ENCODE measurements at regions of chr14 and their contacts with region 1.

Region 1: GRCh38 chr14:103910262-103910935 is 17.9 kb upstream of the TDRD9 start:
- DNase-seq: peak; percentile 84 to 93
- H3K4me3 ChIP-seq: no peak overlapping the region
- H3K27ac ChIP-seq: no peak overlapping the region
- H3K4me1 ChIP-seq: 0 out of 2 replicates have a peak, but pooled peaks cover 3% of the 10 kb centered on the region
- H3K27me3 ChIP-seq: no peaks in the 10 kb centered on the region
- CTCF ChIP-seq: peak; percentile 87

Region 2: DNA sequence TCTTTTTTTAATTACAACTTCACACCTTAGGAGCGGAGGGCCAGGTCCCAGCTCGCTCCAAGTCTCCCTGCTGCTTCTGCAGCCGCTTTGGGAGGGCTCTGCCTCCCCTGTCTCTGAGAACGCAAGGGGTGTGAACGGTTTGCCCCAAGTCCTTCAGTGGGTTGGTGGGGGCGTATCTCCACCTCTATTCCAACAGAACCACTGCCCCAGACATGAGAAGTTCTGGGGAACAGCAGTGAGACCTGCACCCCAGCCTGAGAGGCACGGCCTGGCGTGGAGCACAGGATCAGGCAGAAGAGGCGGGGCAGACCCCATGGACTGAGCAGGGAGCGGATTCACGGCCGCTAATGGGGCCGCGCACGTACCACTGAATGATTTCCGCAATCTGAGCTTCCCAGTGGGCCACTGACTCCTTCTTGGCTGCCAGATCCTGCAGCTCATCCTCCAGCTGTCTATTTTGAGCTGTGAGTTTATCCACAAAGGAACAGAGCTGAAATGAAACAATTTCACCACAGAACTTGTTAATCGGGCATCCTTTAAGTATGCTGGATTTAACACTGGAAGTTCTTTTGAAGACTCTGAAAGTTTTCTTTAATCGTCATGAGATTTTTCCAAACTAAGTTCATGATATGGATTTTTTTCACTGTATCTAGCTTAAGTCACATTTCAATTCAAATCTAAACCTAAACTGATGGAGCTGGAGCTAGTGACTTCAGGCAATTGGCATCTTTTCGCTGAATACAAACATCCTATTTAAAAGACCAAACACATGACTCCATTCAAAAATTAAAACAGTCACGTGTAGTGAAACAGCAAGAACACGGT is 943.5 kb before region 1 on chr14:
- CTCF ChIA-PET with region 1: no interaction called
- POLR2A ChIA-PET with region 1: no interaction called
- intact Hi-C with region 1: no loop called
- DNase-seq: no peak
- H3K4me3 ChIP-seq: no peak overlapping the region
- H3K27ac ChIP-seq: no peak overlapping the region
- H3K4me1 ChIP-seq: no peaks in the 10 kb centered on the region
- H3K27me3 ChIP-seq: no peaks in the 10 kb centered on the region
- CTCF ChIP-seq: no peak

Region 3: GRCh38 chr14:103404032-103404918 is 506.1 kb before region 1 on chr14:
- CTCF ChIA-PET with region 1: no interaction called
- POLR2A ChIA-PET with region 1: no interaction called
- intact Hi-C with region 1: no loop called
- DNase-seq: no peak
- H3K4me3 ChIP-seq: no peak overlapping the region
- H3K27ac ChIP-seq: peak overlapping the region; percentile 63
- H3K4me1 ChIP-seq: peaks cover 36% of the 10 kb centered on the region
- H3K27me3 ChIP-seq: no peaks in the 10 kb centered on the region
- CTCF ChIP-seq: no peak

Region 4: DNA sequence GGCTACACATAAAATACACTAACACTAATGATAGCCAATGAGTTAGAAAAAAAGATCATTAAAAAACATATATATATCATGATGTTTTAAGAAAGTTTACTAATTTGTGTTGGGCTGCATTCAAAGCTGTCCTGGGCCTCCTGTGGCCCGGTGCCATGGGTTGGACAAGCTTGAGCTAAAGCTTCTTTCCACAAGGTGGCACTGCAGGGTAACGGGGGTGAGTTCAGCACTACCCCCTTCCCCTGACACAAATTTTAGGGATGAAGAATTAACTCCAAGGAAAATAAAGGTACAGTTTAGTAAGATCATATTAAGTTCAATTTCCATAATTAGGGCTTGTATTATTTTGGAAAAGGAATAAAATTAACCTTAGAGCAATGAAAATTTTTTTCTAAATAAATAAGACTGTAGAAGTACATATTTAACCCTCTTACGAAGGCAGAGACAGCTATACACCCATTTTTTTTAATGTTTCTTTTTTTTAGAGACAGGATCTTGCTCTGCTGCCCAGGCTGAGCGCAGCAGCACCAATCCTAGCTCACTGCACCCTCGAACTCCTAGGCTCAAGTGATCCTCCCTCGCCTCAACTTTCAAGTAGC is 101.9 kb before region 1 on chr14:
- CTCF ChIA-PET with region 1: interaction called, 8 read pairs
- POLR2A ChIA-PET with region 1: no interaction called
- intact Hi-C with region 1: loop called (anchors 1 kb)
- DNase-seq: peak; percentile 49 to 69
- H3K4me3 ChIP-seq: no peak overlapping the region
- H3K27ac ChIP-seq: no peak overlapping the region
- H3K4me1 ChIP-seq: no peaks in the 10 kb centered on the region
- H3K27me3 ChIP-seq: no peaks in the 10 kb centered on the region
- CTCF ChIP-seq: peak; percentile 92